Activated CD4-positive, alpha-beta T cell treated with anti-CD3 and anti-CD28 coated beads, Interleukin-2, amount 10 ng/mL, durations not matched to agents 24 days and 14 days (primary cell): ENCODE measurements at regions of chr12 and their contacts with region 1.

Region 1: GRCh38 chr12:43805860-43806736 is at the start of gene TWF1:
- DNase-seq: peak; percentile 97
- H3K4me3 Mint-ChIP-seq: peak within 1 kb of the TSS; percentile 94
- H3K27ac Mint-ChIP-seq: peak within 1 kb of the TSS; percentile 100
- H3K4me1 Mint-ChIP-seq: peaks cover 15% of the 10 kb centered on the region
- H3K27me3 Mint-ChIP-seq: no peaks in the 10 kb centered on the region
- total RNA-seq, gene TWF1: 27.0 and 28.3 TPM in 2 replicates

Region 2: DNA sequence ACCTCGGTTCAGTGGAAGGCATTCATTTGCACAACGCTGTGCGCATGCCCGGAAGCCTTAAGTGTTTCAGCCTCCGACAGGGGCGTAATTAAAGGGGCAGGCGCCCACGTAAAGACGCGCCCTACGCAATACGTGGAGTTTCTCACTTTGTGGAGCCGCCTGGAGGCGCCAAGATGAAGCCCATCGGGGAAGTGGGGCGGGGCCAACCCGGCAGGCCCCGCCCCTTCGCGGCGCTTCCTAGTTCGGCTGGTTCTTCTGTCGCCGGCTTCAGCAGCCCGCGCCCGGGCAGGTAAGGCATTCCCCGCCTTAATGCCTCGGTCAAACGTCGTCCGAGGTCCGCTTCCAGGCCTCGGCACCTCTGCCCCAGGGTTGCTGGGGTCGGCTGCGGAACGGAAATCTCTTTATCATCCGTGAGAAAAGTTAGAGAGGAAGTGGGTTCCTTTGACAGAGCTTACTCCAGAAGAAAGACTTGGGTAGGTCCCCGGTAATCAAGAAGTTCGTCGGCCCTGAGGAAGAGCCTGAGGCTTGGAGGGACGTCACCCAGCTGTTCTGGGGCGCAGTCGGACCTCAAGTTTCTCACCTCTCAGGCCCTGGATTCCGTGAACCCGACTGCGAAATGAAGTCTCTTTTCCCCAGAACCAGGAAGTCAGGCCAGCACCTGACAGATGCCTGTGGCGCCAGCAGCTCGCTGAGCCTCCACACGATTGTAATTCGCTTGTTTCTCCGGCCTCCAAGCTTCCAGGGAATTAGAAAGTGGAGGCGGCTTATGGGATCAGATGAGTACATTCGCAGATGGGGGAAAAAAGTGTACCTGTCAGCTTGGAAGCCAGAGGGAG is 47.2 kb before region 1 on chr12 and contains the starts of genes IRAK4 and PUS7L:
- intact Hi-C with region 1: loop called (anchors 1 kb)
- DNase-seq: peak; percentile 98
- H3K4me3 Mint-ChIP-seq: peak within 1 kb of the TSS; percentile 89
- H3K27ac Mint-ChIP-seq: peak within 1 kb of the TSS; percentile 98
- H3K4me1 Mint-ChIP-seq: peaks cover 49% of the 10 kb centered on the region
- H3K27me3 Mint-ChIP-seq: no peaks in the 10 kb centered on the region
- total RNA-seq, gene IRAK4: 21.4 and 23.5 TPM in 2 replicates
- total RNA-seq, gene PUS7L: 23.0 and 29.1 TPM in 2 replicates

Region 3: DNA sequence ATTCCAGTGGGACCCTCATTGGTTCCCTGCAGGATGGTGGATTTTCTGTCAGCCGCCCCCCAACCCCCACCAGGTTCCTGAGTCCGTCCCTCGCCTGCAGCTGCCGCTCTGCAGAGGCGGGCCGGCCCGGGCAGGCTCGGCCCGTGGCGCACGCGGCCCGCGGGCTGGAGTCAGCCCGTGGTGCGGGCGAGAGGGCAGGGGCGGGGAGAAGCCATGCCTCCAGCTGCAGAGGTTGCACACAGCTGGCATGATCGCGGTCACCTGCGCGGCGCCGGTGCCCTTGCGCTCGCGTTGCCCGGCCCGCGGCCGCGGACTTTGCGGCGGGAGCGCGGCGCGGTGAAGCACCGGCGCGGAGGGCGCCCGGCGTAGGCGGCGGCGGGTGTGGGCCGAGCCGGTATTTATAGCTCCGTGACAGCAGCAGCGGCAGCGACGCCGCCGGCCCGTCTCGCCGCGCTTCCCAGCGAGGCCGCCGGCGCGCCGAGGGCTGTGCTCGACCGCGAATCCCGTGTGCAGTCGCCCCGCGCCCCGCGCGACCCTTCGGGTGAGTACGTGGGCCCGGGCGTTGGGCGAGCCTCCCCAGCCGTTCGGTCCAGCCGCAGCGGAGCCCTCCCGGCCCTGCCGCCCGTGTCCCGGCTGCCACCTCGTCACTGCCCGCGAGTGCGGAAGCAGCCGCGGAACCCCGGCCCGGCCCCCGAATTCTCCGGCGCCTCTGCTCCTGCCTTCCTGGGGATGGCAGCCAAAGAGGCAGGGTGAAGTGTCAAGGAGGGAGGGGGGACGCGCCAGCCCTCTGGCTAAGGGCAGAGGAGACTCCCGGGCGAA is 29.8 kb after region 1 on chr12 and contains the start of gene TMEM117:
- intact Hi-C with region 1: loop called (anchors 1 kb)
- DNase-seq: peak; percentile 88
- H3K4me3 Mint-ChIP-seq: peak within 1 kb of the TSS; percentile 79
- H3K27ac Mint-ChIP-seq: peak within 1 kb of the TSS; percentile 63
- H3K4me1 Mint-ChIP-seq: peaks cover 17% of the 10 kb centered on the region
- H3K27me3 Mint-ChIP-seq: peaks cover 33% of the 10 kb centered on the region
- total RNA-seq, gene TMEM117: 0.82 and 1.1 TPM in 2 replicates

Region 4: DNA sequence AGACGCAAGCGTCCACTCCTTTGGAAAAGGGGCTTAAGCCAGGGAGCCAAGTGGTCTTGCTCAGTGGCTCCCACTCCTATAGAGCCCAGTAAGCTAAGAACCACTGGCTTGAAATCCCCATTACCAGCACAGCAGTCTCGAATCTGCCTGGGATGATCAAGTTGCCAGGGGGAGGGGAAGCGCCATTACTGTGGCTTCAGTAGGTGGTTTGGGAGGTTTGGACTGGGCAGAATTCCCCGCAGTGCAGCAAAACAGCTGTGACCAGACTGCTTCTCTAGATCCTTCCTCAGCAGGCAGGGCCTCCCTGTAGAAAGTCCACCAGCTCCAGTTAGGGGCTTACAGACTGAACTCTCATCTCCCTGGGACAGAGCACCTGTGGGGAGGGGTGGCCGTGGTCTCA is 145.2 kb after region 1 on chr12:
- intact Hi-C with region 1: no loop called
- DNase-seq: no peak
- H3K4me3 Mint-ChIP-seq: no peak overlapping the region
- H3K27ac Mint-ChIP-seq: no peak overlapping the region
- H3K4me1 Mint-ChIP-seq: peaks cover 7% of the 10 kb centered on the region
- H3K27me3 Mint-ChIP-seq: peaks cover 1% of the 10 kb centered on the region